CD14-positive monocyte (primary cell): ENCODE measurements at regions of chr1 and their contacts with region 1.

Region 1: GRCh38 chr1:169106095-169106920 is at the start of gene ATP1B1:
- DNase-seq: peak; percentile 48 to 66 (median 61)
- H3K4me3 ChIP-seq: peak within 1 kb of the TSS; percentile 70 to 96 (median 82)
- H3K4me3 Mint-ChIP-seq: peak within 1 kb of the TSS; percentile 83 to 95
- H3K27ac ChIP-seq: peak within 1 kb of the TSS in 1 of 2 donors; percentile 39
- H3K27ac Mint-ChIP-seq: peak within 1 kb of the TSS; percentile 50 to 88 (median 61)
- H3K4me1 ChIP-seq: peaks cover 35 to 53% of the 10 kb centered on the region in 2 donors
- H3K4me1 Mint-ChIP-seq: peaks cover 47% of the 10 kb centered on the region
- H3K27me3 ChIP-seq: peaks cover 27 to 38% of the 10 kb centered on the region in 2 donors
- H3K27me3 Mint-ChIP-seq: peaks cover 11 to 27% (median 19%) of the 10 kb centered on the region in 3 donors
- CTCF ChIP-seq: peak; percentile 65
- polyA plus RNA-seq, gene ATP1B1: 0.63 to 5.1 (median 0.72) TPM

Region 2: GRCh38 chr1:168342572-168343280 is 763.6 kb before region 1 on chr1:
- intact Hi-C with region 1: loop called in 1 of 2 experiments (anchors 10 kb)
- DNase-seq: peak; percentile 80 to 81 (median 81)
- H3K4me3 ChIP-seq: peak overlapping the region in 1 of 3 experiments; percentile 44
- H3K4me3 Mint-ChIP-seq: peak overlapping the region; percentile 27 to 71
- H3K27ac ChIP-seq: no peak overlapping the region
- H3K27ac Mint-ChIP-seq: peak overlapping the region in 1 of 7 donors; percentile 11
- H3K4me1 ChIP-seq: peaks cover 7 to 8% of the 10 kb centered on the region in 2 donors
- H3K4me1 Mint-ChIP-seq: peaks cover 17% of the 10 kb centered on the region
- H3K27me3 ChIP-seq: no peaks in the 10 kb centered on the region
- H3K27me3 Mint-ChIP-seq: peaks cover 0 to 4% (median 3%) of the 10 kb centered on the region in 3 donors
- CTCF ChIP-seq: peak; percentile 79

Region 3: DNA sequence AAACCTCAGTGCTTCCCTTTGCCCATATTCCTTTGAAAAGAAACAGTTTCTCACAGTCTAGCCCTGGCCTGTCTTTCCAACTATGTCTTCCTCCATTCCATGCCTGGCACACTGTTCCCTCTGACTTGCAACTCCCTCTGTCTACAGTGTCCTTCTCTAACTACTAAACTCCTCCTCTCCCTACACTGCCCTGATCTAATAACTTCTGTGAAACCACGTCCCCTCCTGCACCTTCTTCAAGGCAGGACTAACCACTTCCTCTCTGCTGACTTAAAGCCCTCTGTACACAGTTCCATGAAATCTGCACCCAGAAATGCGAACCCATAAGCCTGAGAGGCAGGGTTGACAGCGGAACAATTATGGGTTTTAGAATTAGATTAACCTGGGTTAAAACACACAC is 62.0 kb before region 1 on chr1:
- intact Hi-C with region 1: loop called in 1 of 2 experiments (anchors 10 kb)
- DNase-seq: peak; percentile 45 to 48 (median 47)
- H3K4me3 ChIP-seq: peak overlapping the region in 1 of 3 experiments; percentile 31
- H3K4me3 Mint-ChIP-seq: peak overlapping the region; percentile 28 to 58
- H3K27ac ChIP-seq: peak overlapping the region in 1 of 2 donors; percentile 53
- H3K27ac Mint-ChIP-seq: peak overlapping the region; percentile 76 to 85 (median 83)
- H3K4me1 ChIP-seq: peaks cover 56 to 70% of the 10 kb centered on the region in 2 donors
- H3K4me1 Mint-ChIP-seq: peaks cover 64% of the 10 kb centered on the region
- H3K27me3 ChIP-seq: no peaks in the 10 kb centered on the region
- H3K27me3 Mint-ChIP-seq: peaks cover 0 to 7% (median 3%) of the 10 kb centered on the region in 3 donors
- CTCF ChIP-seq: no peak

Region 4: GRCh38 chr1:169091480-169091941 is 14.8 kb before region 1 on chr1:
- intact Hi-C with region 1: no loop called
- DNase-seq: no peak
- H3K4me3 ChIP-seq: no peak overlapping the region
- H3K4me3 Mint-ChIP-seq: no peak overlapping the region
- H3K27ac ChIP-seq: no peak overlapping the region
- H3K27ac Mint-ChIP-seq: no peak overlapping the region
- H3K4me1 ChIP-seq: no peaks in the 10 kb centered on the region
- H3K4me1 Mint-ChIP-seq: peaks cover 5% of the 10 kb centered on the region
- H3K27me3 ChIP-seq: no peaks in the 10 kb centered on the region
- H3K27me3 Mint-ChIP-seq: peaks cover 0 to 2% (median 0%) of the 10 kb centered on the region in 3 donors
- CTCF ChIP-seq: no peak

Region 5: GRCh38 chr1:169367486-169368405 is 261.4 kb after region 1 on chr1 and contains the starts of genes BLZF1 and NME7:
- intact Hi-C with region 1: loop called in 1 of 2 experiments (anchors 10 kb)
- DNase-seq: peak; percentile 94 to 97 (median 96)
- H3K4me3 ChIP-seq: peak within 1 kb of the TSS; percentile 76 to 100 (median 84)
- H3K4me3 Mint-ChIP-seq: no peak within 1 kb of the TSS
- H3K27ac ChIP-seq: peak within 1 kb of the TSS; percentile 65 to 92
- H3K27ac Mint-ChIP-seq: peak within 1 kb of the TSS in 1 of 7 donors; percentile 20
- H3K4me1 ChIP-seq: peaks cover 7 to 18% of the 10 kb centered on the region in 2 donors
- H3K4me1 Mint-ChIP-seq: peaks cover 9% of the 10 kb centered on the region
- H3K27me3 ChIP-seq: no peaks in the 10 kb centered on the region
- H3K27me3 Mint-ChIP-seq: no peaks in the 10 kb centered on the region
- CTCF ChIP-seq: no peak
- polyA plus RNA-seq, gene BLZF1: 4.8 to 7.9 (median 5.5) TPM
- polyA plus RNA-seq, gene NME7: 3.5 to 8.0 (median 6.0) TPM